GM10248 (cell line): ENCODE measurements at regions of chr1 and their contacts with region 1.

Region 1: GRCh38 chr1:92503043-92503925 is 16.6 kb upstream of the GFI1 start:
- DNase-seq: peak; percentile 23
- CTCF ChIP-seq: no peak

Region 2: GRCh38 chr1:92485381-92486257 is 17.7 kb before region 1 on chr1:
- CTCF ChIA-PET with region 1: interaction called, 10 read pairs
- POLR2A ChIA-PET with region 1: interaction called, 4 read pairs
- DNase-seq: peak; percentile 74
- CTCF ChIP-seq: peak; percentile 58